Heart right ventricle (tissue), 16 donors: ENCODE measurements at regions of chrX and their contacts with region 1.

Region 1: GRCh38 chrX:119004920-119005524 is 30.6 kb downstream of the LONRF3 start:
- DNase-seq: peak; percentile 13 to 55
- ATAC-seq: peak; percentile 38 to 83 (median 70)
- H3K4me3 ChIP-seq: no peak overlapping the region
- H3K27ac ChIP-seq: no peak overlapping the region
- H3K4me1 ChIP-seq: peaks cover 0 to 28% (median 0%) of the 10 kb centered on the region in 9 donors
- H3K27me3 ChIP-seq: peaks cover 0 to 19% (median 0%) of the 10 kb centered on the region in 7 donors
- CTCF ChIP-seq: peak; percentile 50 to 93 (median 77)

Region 2: GRCh38 chrX:118862091-118862490 is 142.9 kb before region 1 on chrX:
- intact Hi-C with region 1: loop called in 1 of 10 experiments (anchors 5 kb)
- DNase-seq: no peak
- ATAC-seq: peak in 1 of 8 donors; percentile 25
- H3K4me3 ChIP-seq: no peak overlapping the region
- H3K27ac ChIP-seq: no peak overlapping the region
- H3K4me1 ChIP-seq: no peaks in the 10 kb centered on the region
- H3K27me3 ChIP-seq: peaks cover 0 to 5% (median 0%) of the 10 kb centered on the region in 7 donors
- CTCF ChIP-seq: no peak

Region 3: GRCh38 chrX:118928151-118928550 is 76.9 kb before region 1 on chrX:
- intact Hi-C with region 1: no loop called
- DNase-seq: no peak
- ATAC-seq: no peak
- H3K4me3 ChIP-seq: no peak overlapping the region
- H3K27ac ChIP-seq: no peak overlapping the region
- H3K4me1 ChIP-seq: no peaks in the 10 kb centered on the region
- H3K27me3 ChIP-seq: no peaks in the 10 kb centered on the region
- CTCF ChIP-seq: no peak

Region 4: DNA sequence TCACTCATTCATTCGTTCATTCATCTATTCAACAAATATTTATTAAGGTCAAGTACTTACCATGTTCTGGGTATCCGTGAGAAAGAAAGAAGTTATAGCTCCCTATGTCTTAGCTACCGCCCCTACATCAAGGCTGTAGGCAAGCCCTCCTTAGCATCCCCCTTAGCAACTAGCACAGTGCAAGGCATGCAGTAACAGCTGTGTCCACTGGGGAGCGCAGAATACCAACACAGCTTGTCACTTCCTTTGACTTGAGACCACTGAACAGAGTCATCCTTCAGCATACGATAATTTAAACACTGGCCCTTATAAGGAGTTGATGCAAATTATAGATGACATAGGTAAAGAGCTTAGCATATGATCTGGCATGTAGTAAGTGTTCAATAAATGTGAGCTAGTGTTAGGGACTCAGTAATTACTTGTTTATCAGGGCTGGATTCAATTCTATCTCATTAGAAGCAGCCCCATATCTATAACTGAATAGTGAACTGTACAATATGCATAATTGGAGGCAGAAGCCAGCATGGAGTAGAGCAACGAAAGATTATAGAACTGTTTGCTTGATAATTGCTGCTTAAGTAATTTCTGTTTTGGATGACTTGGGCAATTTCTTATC is 113.9 kb after region 1 on chrX:
- intact Hi-C with region 1: no loop called
- DNase-seq: peak; percentile 25 to 40
- ATAC-seq: peak in 3 of 8 donors; percentile 51 to 64 (median 55)
- H3K4me3 ChIP-seq: no peak overlapping the region
- H3K27ac ChIP-seq: no peak overlapping the region
- H3K4me1 ChIP-seq: no peaks in the 10 kb centered on the region
- H3K27me3 ChIP-seq: peaks cover 0 to 27% (median 0%) of the 10 kb centered on the region in 7 donors
- CTCF ChIP-seq: peak; percentile 41 to 84 (median 70)